GM12878 (cell line): ENCODE measurements at regions of chr12 and their contacts with region 1.

Region 1: DNA sequence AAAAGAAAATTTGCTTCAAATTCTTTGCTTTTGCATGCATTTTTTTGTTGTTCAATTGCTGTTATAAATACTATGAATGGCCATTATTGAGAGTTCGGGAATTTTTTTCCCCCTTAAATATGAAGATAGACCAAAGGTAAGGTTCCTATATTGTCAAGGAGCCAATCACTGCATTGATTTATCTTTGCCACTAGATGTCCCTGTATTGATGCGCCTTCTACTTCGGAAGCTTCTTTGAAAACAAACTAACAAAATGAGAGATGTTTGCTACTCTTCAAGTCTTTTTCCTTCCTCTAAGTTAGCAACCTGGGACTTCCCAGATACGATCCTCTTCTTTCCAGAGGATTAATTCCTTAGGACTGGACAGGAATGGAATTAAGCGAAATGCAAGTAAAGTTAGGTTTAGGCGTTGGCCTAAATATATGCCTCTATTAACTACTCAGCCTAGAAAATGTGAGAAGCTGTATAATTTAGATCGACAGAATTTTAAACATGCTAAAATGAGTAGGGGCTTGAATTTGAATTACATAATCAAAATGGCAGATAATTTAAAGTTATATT is 318.1 kb downstream of the AEBP2 start:
- DNase-seq: peak; percentile 5
- ATAC-seq: peak; percentile 79
- H3K4me3 ChIP-seq: no peak overlapping the region
- H3K27ac ChIP-seq: no peak overlapping the region
- H3K4me1 ChIP-seq: no peaks in the 10 kb centered on the region
- H3K27me3 ChIP-seq: no peaks in the 10 kb centered on the region
- CTCF ChIP-seq: peak; percentile 46 to 65 (median 56)
- EP300 ChIP-seq: no peak
- POLR2A ChIP-seq: no peak
- RAD21 ChIP-seq: peak; percentile 82

Region 2: DNA sequence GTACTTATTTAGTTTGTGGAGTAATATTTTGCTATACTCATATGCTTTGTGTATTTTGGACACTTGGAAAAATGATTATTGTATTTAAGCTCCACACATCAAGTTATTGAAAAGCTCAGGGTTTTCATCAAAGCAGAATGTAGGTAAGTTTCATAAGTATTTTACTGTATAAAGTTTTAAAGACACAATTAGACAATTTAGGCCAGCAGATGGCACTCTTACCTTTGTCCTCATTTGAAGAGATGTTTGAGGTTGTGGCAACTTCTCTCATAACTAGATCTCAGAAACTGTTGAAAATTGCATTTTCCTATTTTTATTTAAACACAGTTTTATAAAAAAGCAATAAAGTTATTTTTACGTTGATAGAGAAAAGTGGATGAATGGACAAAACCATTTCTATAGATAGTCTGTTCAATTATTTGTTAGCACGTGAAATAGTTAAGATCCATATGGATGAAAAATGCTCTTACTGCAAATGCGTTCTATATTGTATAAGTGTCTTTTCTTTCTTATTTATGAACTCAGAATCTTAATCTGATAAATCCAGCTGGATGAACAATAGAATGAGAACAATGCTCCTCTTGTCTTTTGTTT is 18.1 kb before region 1 on chr12:
- CTCF ChIA-PET with region 1: interaction called, 14 read pairs
- POLR2A ChIA-PET with region 1: no interaction called
- RAD21 ChIA-PET with region 1: interaction called, 7 read pairs
- SMC1A ChIA-PET with region 1: interaction called, 3 read pairs
- in situ Hi-C with region 1: no loop called
- intact Hi-C with region 1: no loop called
- DNase-seq: peak; percentile 16
- ATAC-seq: peak; percentile 70
- H3K4me3 ChIP-seq: no peak overlapping the region
- H3K27ac ChIP-seq: no peak overlapping the region
- H3K4me1 ChIP-seq: no peaks in the 10 kb centered on the region
- H3K27me3 ChIP-seq: no peaks in the 10 kb centered on the region
- CTCF ChIP-seq: peak; percentile 47 to 62 (median 53)
- EP300 ChIP-seq: no peak
- POLR2A ChIP-seq: no peak
- RAD21 ChIP-seq: peak; percentile 75

Region 3: DNA sequence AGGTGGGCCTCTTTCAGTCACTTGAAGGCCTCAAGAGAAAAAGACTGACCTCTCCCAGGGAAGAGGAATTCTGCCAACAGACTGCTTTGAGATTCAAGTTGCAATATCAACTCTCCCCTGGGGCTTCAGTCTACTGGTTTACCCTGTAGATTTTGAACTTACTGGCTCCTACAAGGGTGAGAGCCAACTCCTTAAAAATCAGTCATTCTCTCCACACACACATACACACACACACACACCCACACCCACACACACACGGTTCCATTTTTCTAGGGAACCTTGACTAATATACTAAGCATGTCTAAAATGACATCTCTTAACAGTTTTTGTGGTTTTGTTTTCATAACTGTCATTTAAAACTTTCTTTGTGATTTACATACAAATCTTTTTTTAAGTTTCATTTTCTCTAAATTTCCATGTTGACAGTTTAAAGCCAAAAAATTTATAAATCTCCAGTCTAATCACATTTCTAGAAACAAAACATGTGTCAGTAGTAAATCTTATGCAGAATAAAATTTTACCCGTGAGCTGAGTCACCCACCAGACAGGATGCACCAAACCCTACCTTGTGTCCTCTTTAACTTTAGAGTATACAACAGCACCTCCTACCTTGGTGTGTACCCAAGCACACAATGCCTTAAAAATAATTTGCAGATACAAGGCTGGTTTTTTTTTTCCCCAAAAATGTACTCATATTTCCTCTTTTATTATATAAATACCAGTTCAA is 76.5 kb after region 1 on chr12:
- CTCF ChIA-PET with region 1: interaction called, 5 read pairs
- POLR2A ChIA-PET with region 1: no interaction called
- RAD21 ChIA-PET with region 1: interaction called, 3 read pairs
- SMC1A ChIA-PET with region 1: interaction called, 3 read pairs
- in situ Hi-C with region 1: no loop called
- intact Hi-C with region 1: loop called (anchors 5 kb)
- DNase-seq: no peak
- ATAC-seq: peak; percentile 86
- H3K4me3 ChIP-seq: no peak overlapping the region
- H3K27ac ChIP-seq: no peak overlapping the region
- H3K4me1 ChIP-seq: no peaks in the 10 kb centered on the region
- H3K27me3 ChIP-seq: no peaks in the 10 kb centered on the region
- CTCF ChIP-seq: no peak
- EP300 ChIP-seq: 0 out of 4 replicates have a peak, but pooled peaks of 1 of the 2 experiments have one; percentile 36
- POLR2A ChIP-seq: no peak
- RAD21 ChIP-seq: no peak

Region 4: GRCh38 chr12:20220339-20220738 is 462.9 kb after region 1 on chr12:
- CTCF ChIA-PET with region 1: interaction called, 11 read pairs
- POLR2A ChIA-PET with region 1: no interaction called
- RAD21 ChIA-PET with region 1: interaction called, 13 read pairs
- SMC1A ChIA-PET with region 1: interaction called, 6 read pairs
- in situ Hi-C with region 1: no loop called
- intact Hi-C with region 1: loop called (anchors 1 kb)
- DNase-seq: peak; percentile 5
- ATAC-seq: peak; percentile 87
- H3K4me3 ChIP-seq: no peak overlapping the region
- H3K27ac ChIP-seq: no peak overlapping the region
- H3K4me1 ChIP-seq: no peaks in the 10 kb centered on the region
- H3K27me3 ChIP-seq: no peaks in the 10 kb centered on the region
- CTCF ChIP-seq: peak; percentile 15 to 44 (median 35); a peak in 4 of 6 replicates
- EP300 ChIP-seq: no peak
- POLR2A ChIP-seq: no peak
- RAD21 ChIP-seq: peak; percentile 61

Region 5: GRCh38 chr12:20376984-20377383 is 619.6 kb after region 1 on chr12:
- CTCF ChIA-PET with region 1: interaction called, 6 read pairs
- POLR2A ChIA-PET with region 1: no interaction called
- RAD21 ChIA-PET with region 1: no interaction called
- SMC1A ChIA-PET with region 1: interaction called, 4 read pairs
- in situ Hi-C with region 1: no loop called
- intact Hi-C with region 1: loop called (anchors 1 kb)
- DNase-seq: no peak
- ATAC-seq: peak; percentile 44
- H3K4me3 ChIP-seq: no peak overlapping the region
- H3K27ac ChIP-seq: no peak overlapping the region
- H3K4me1 ChIP-seq: no peaks in the 10 kb centered on the region
- H3K27me3 ChIP-seq: no peaks in the 10 kb centered on the region
- CTCF ChIP-seq: peak in 1 of 3 experiments; percentile 36; a peak in 1 of 6 replicates
- EP300 ChIP-seq: no peak
- POLR2A ChIP-seq: no peak
- RAD21 ChIP-seq: peak; percentile 60

Region 6: GRCh38 chr12:20601668-20602280 is 844.4 kb after region 1 on chr12:
- CTCF ChIA-PET with region 1: no interaction called
- POLR2A ChIA-PET with region 1: no interaction called
- RAD21 ChIA-PET with region 1: no interaction called
- SMC1A ChIA-PET with region 1: no interaction called
- in situ Hi-C with region 1: no loop called
- intact Hi-C with region 1: loop called (anchors 5 kb)
- DNase-seq: no peak
- ATAC-seq: no peak
- H3K4me3 ChIP-seq: no peak overlapping the region
- H3K27ac ChIP-seq: no peak overlapping the region
- H3K4me1 ChIP-seq: no peaks in the 10 kb centered on the region
- H3K27me3 ChIP-seq: no peaks in the 10 kb centered on the region
- CTCF ChIP-seq: peak in 1 of 3 experiments; percentile 41; a peak in 1 of 6 replicates
- EP300 ChIP-seq: no peak
- POLR2A ChIP-seq: no peak
- RAD21 ChIP-seq: peak; percentile 32; the same call in 1 of the 2 replicates